SK-N-SH (cell line): ENCODE measurements at regions of chr17 and their contacts with region 1.

Region 1: DNA sequence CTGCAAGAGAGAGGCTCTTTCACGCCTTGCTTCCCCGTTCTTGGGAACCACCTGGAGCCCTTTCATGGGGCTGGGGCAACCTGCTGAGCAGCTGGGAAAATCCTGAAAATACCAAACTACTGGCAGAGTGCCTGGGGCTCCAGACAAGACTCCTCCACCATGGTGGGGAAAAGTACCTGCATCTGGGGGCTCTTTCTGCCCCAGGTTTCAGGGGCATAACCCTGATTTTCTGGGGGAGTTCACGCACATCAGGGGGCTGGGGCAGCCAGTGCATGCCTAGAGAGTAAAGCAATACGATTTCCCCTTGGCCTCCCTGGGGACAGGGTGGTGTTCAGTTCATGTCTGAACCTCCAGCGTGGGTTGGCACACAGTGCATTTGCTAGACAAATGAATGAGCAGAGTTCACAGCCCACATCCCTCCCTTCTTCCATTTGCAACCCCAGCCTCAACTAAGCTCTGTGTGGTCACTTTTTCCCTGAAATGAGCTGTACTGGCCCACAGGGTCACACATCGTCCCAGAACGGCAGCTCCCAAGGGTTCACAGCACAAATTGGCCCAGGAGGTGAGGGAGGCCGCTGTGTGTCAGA is 5.2 kb upstream of the CDC42EP4 start:
- DNase-seq: no peak
- H3K4me3 ChIP-seq: no peak overlapping the region
- H3K27ac ChIP-seq: peak overlapping the region in 1 of 2 experiments; percentile 48; a peak in 2 of 4 replicates
- H3K4me1 ChIP-seq: peaks cover 6 to 40% of the 10 kb centered on the region in 2 experiments; a peak in 3 of 4 replicates
- H3K27me3 ChIP-seq: no peaks in the 10 kb centered on the region
- CTCF ChIP-seq: no peak
- EP300 ChIP-seq: no peak
- RAD21 ChIP-seq: no peak

Region 2: GRCh38 chr17:73083432-73083831 is 233.6 kb before region 1 on chr17:
- CTCF ChIA-PET with region 1: no interaction called
- POLR2A ChIA-PET with region 1: no interaction called
- DNase-seq: no peak
- H3K4me3 ChIP-seq: no peak overlapping the region
- H3K27ac ChIP-seq: no peak overlapping the region
- H3K4me1 ChIP-seq: no peaks in the 10 kb centered on the region
- H3K27me3 ChIP-seq: no peaks in the 10 kb centered on the region
- CTCF ChIP-seq: no peak
- EP300 ChIP-seq: no peak
- RAD21 ChIP-seq: no peak

Region 3: DNA sequence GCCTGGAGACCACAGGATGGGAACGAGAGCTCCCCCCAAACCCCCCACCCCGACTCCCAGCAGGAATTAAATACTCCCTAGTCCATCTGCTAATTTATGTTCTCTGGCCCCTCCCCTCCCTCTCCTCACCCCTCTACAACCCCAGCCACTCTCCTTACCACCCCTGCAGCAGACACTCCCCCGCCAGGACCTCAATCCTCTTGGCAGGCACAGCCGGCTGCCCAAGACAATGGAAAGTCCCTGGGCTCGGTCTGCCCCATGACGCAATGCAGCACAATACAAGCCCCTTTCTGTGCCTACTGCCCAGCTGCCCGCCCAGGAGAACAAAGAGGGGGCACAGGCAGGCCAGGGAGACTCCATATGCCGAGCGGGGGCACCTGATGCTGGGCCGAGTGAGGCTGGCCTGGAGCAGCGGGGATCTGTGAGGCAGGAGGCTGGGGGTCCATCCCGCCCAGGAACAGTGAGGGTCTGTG is 25.1 kb after region 1 on chr17:
- CTCF ChIA-PET with region 1: interaction called, 47 read pairs
- POLR2A ChIA-PET with region 1: interaction called, 6 read pairs
- DNase-seq: peak; percentile 69
- H3K4me3 ChIP-seq: no peak overlapping the region
- H3K27ac ChIP-seq: peak overlapping the region; percentile 70 to 92
- H3K4me1 ChIP-seq: peaks cover 23 to 42% of the 10 kb centered on the region in 2 experiments
- H3K27me3 ChIP-seq: no peaks in the 10 kb centered on the region
- CTCF ChIP-seq: no peak
- EP300 ChIP-seq: peak in 1 of 2 experiments; percentile 9; a peak in 1 of 4 replicates
- RAD21 ChIP-seq: no peak